ENCODE measurements at regions of chr16 and their contacts with region 1.

Region 1: GRCh38 chr16:31458844-31459721 is at the start of gene ARMC5:
- DNase-seq: peak; percentile 98
- H3K4me3 Mint-ChIP-seq: peak within 1 kb of the TSS; percentile 92
- H3K27ac Mint-ChIP-seq: peak within 1 kb of the TSS; percentile 92
- H3K4me1 Mint-ChIP-seq: peaks cover 48% of the 10 kb centered on the region
- H3K27me3 Mint-ChIP-seq: no peaks in the 10 kb centered on the region
- total RNA-seq, gene ARMC5: 10.1 to 12.0 TPM

Region 2: DNA sequence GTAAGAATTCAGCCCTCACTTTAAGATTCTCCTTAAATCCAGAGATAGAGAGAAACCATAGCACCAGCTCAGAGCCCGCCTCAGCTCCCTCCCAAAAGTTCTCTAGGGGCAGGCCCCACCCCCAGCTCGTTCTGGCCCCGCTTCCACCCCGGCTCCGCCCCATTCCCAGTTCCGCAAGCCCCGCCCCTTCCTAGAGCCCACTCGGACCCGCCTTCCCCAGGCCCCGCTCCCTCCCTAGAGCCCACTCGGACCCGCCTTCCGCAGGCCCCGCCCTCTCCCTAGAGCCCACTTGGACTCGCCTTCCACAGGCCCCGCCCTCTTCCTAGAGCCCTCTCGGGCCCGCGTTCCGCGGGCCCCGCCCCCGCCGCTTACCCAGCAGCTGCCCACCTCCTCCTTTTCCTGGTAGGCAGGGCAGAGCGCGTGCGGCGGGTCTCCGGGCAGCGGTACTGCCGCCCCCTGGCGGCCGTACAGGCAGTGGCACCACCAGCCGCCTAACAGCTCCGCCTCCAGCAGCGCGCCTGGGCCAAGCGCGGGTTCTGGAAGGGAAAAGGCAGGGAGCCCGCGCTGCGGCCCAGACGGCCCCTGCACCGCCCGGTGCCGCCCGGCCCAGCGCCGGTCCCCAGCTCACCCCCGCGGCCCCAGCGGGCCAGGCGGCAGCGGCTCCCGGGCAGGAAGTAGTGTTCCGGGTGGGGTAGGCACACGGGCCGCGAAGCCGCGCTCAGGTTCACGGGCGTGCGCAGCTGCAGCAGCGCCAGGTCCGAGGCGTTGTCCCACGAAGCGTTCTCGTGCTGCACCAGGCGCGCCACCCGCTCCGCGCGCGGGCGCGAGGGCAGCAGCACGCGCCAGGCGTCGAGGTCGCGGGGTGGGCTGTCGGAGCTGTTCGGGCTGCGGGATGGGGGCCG is 316.7 kb before region 1 on chr16:
- CTCF ChIA-PET with region 1: interaction called, 17 read pairs
- POLR2A ChIA-PET with region 1: interaction called, 8 read pairs
- DNase-seq: peak; percentile 99
- H3K4me3 Mint-ChIP-seq: peak overlapping the region; percentile 61
- H3K27ac Mint-ChIP-seq: peak overlapping the region; percentile 50
- H3K4me1 Mint-ChIP-seq: peaks cover 20% of the 10 kb centered on the region
- H3K27me3 Mint-ChIP-seq: peaks cover 7% of the 10 kb centered on the region

Region 3: GRCh38 chr16:31202414-31203375 is 256.4 kb before region 1 on chr16 and contains the start of gene PYCARD:
- CTCF ChIA-PET with region 1: interaction called, 10 read pairs
- POLR2A ChIA-PET with region 1: interaction called, 30 read pairs
- DNase-seq: peak; percentile 58
- H3K4me3 Mint-ChIP-seq: peak within 1 kb of the TSS; percentile 87
- H3K27ac Mint-ChIP-seq: peak within 1 kb of the TSS; percentile 79
- H3K4me1 Mint-ChIP-seq: peaks cover 61% of the 10 kb centered on the region
- H3K27me3 Mint-ChIP-seq: peaks cover 5% of the 10 kb centered on the region
- total RNA-seq, gene PYCARD: 96.1 to 102 TPM

Region 4: DNA sequence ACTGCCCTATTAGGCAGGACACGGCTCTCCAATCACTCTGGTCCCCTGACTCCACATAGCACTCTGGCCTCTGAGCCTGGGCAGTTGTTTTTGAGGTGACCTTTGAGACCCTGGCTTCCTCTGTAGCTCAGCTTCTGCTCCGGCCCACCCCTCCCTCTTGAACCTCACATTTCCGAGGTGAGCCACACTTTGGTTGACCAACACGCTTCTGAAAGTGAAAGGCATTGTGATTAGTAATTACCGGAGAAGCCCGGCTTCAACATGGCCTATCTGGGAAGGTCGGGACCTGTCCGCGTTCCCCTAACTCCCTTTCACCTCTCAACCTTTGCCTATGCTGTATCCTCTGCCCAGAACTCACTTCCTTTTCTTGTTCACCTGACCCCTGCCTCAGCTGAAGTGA is 114.4 kb before region 1 on chr16:
- CTCF ChIA-PET with region 1: no interaction called
- POLR2A ChIA-PET with region 1: no interaction called
- DNase-seq: peak; percentile 38
- H3K4me3 Mint-ChIP-seq: no peak overlapping the region
- H3K27ac Mint-ChIP-seq: no peak overlapping the region
- H3K4me1 Mint-ChIP-seq: peaks cover 21% of the 10 kb centered on the region
- H3K27me3 Mint-ChIP-seq: peaks cover 49% of the 10 kb centered on the region

Region 5: GRCh38 chr16:31476303-31477219 is 17.5 kb after region 1 on chr16:
- CTCF ChIA-PET with region 1: interaction called, 22 read pairs
- POLR2A ChIA-PET with region 1: interaction called, 44 read pairs
- DNase-seq: peak; percentile 92
- H3K4me3 Mint-ChIP-seq: peak overlapping the region; percentile 78
- H3K27ac Mint-ChIP-seq: peak overlapping the region; percentile 47
- H3K4me1 Mint-ChIP-seq: peaks cover 24% of the 10 kb centered on the region
- H3K27me3 Mint-ChIP-seq: peaks cover 43% of the 10 kb centered on the region

Region 6: DNA sequence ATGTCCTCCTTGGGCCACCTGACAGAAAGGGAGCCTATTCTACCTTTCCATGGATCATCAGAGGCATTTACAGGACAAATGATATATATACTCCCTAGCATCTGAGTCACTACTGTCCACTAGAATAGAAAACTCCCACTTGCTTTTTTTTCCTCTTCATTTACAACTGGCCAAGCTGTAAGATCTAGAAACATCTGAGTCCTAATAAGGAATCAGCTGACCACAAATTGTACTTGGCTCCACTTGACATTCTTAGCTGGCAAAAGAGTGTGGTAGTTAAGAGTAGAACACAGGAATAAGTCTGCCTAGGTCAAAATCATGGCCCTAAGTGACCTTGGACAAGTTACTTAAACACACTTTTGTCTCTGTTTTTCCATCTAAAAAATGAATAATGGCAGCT is 43.9 kb after region 1 on chr16:
- CTCF ChIA-PET with region 1: interaction called, 13 read pairs
- POLR2A ChIA-PET with region 1: interaction called, 30 read pairs
- DNase-seq: no peak
- H3K4me3 Mint-ChIP-seq: no peak overlapping the region
- H3K27ac Mint-ChIP-seq: no peak overlapping the region
- H3K4me1 Mint-ChIP-seq: peaks cover 31% of the 10 kb centered on the region
- H3K27me3 Mint-ChIP-seq: no peaks in the 10 kb centered on the region

Region 7: DNA sequence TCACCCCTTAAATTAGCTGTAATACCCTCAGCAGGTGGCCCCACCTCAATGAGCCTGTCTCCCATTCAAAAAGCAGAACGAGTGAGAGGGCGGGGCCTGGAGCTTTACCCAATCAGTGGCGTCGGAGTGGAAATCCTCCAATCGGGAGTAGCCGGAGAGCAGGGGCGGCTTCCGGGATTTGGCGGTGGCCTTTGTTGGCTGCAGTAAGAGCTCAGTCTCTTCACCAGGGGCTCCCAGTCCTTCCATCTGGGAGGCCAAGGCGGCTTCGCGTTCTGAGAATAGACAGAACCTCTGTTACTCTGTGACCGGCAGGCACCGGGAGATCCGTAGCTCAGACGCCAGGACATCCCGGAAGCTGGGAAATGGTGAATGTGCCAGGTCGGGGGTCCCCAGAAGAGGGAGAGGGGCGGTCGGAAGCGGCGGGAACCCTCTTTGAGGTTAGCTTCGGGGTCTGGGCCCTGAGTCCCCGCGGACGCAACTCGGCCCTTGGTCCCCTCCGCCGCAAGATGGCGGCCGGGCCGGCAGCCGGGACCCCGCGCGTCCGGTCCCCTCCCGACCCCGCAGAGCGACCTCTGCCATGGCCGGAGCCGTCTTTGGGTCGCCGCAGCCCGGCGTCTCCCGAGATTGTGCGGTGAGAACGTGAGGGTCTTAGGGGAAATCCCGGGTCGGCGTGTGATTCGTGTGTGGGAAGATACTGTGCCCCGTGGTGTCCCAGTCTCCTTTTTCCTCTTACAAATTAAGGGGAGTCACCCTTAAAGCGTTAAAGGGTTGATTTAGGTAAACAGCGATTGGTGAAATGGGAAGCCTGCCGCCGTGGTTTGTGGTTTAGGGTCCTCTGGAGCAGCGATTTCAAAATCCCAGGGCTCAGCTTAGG is 254.2 kb after region 1 on chr16:
- CTCF ChIA-PET with region 1: interaction called, 10 read pairs
- POLR2A ChIA-PET with region 1: interaction called, 31 read pairs
- DNase-seq: peak; percentile 93
- H3K4me3 Mint-ChIP-seq: peak overlapping the region; percentile 97
- H3K27ac Mint-ChIP-seq: peak overlapping the region; percentile 96
- H3K4me1 Mint-ChIP-seq: peaks cover 36% of the 10 kb centered on the region
- H3K27me3 Mint-ChIP-seq: no peaks in the 10 kb centered on the region

Region 8: DNA sequence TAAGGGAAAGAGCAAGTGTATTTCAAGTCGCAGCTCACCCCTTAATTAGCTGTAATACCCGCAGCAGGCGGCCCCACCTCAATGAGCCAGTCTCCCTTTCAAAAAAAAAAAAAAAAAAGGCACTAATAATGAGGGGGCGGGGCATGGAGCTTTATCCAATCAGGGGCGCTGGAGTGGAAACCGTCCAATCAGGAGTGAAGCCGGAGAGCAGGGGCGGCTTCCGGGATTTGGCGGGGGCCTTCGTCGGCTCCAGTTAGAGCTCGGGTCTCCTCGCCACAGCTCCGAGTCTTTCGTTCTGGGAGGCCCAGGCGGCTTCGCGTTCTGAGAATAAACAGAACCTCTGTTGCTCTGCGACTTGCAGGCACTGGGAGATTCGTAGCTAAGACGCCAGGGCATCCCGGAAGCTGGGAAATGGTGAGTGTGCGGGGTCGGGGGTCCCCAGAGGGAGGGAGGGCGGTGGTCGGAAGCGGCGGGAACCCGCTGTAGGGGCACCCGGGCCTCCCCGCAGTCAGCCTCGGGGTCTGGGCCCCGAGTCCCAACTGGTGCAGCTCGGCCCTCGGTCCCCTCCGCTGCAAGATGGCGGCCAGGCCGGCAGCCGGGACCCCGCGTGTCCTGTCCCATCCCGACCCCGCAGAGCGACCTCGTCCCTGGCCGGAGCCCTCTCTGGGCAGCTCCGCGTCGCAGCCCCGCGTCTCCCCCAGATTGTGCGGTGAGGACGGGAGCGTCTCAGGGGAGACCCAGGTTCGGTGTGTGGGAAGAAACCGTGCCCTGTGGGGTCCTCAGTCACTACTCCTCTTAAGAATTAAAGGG is 414.7 kb after region 1 on chr16 and contains the start of gene ZNF267:
- CTCF ChIA-PET with region 1: interaction called, 69 read pairs
- POLR2A ChIA-PET with region 1: interaction called, 63 read pairs
- DNase-seq: peak; percentile 95
- H3K4me3 Mint-ChIP-seq: peak within 1 kb of the TSS; percentile 87
- H3K27ac Mint-ChIP-seq: peak within 1 kb of the TSS; percentile 97
- H3K4me1 Mint-ChIP-seq: peaks cover 76% of the 10 kb centered on the region
- H3K27me3 Mint-ChIP-seq: no peaks in the 10 kb centered on the region
- total RNA-seq, gene ZNF267: 86.2 to 88.3 TPM